ENCODE measurements at regions of chr16 and their contacts with region 1.

Region 1: DNA sequence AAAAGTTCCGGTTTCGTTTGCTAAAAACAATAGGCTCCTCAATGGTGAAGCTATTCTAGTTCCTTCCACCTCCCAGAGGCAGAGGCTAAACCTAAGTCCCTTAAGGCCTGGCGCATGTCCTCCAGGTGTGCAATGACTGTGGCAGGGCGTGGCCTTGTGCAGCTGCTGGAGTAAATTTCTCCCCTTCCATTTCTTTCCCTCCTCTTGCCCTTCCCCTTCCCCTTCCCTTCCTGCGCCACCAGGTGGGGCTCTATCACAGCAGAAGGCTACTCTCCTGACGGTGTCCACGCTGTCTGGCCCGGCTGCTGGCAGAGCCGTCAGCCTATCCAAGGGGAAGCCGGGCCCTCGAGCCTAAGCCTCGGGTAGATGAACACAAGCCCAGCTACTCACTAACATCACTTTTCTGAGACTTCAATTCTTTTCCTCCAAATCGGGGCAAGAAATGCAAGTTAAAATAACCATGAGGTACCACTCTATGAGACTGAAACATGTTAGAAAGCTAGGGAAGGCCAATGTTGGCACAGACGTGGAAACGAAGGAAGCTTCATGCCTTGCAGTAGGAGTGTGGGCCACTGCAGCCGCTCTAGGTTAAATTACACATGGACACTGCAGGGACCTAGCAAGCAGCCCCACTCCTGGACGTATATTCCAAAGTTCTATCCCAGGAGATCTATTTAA is 34.4 kb downstream of the C16orf78 start:
- DNase-seq: peak; percentile 79

Region 2: DNA sequence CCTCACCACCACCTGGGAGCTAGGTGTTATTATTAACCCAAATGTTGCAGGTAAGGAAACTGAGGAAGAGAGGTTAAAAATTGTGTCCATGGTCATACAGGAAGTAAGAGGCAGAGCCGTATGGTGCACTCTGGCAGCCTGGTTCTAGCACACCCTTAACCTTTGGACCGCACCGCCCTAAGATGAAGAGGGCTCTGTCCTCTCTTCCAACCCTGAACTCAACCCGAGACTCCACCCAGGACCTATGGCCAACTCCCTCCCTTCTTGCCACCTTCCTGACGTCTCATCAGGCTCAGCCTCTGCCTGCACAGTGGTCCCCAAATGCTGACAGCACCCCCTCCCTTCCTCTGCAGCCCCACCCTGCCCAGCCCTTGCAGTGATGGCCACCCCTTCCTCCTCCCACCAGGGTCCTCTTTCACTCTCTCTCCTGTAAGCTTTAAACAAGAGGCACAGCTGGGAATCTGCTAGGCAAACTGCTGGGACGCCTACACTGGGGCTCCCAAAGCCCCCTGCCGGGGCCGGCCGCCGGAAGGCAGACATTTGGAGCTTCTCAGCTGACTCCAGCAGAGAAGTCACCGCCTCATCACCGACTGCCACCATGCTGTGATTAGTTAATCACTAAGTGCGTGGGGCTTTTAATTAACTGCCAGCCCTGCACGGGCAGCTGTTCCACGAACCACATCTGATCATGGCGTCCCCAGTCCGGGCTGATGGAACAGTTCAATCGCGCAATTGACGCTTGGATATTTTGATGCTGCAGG is 51.1 kb before region 1 on chr16:
- in situ Hi-C with region 1: no loop called
- DNase-seq: no peak

Region 3: DNA sequence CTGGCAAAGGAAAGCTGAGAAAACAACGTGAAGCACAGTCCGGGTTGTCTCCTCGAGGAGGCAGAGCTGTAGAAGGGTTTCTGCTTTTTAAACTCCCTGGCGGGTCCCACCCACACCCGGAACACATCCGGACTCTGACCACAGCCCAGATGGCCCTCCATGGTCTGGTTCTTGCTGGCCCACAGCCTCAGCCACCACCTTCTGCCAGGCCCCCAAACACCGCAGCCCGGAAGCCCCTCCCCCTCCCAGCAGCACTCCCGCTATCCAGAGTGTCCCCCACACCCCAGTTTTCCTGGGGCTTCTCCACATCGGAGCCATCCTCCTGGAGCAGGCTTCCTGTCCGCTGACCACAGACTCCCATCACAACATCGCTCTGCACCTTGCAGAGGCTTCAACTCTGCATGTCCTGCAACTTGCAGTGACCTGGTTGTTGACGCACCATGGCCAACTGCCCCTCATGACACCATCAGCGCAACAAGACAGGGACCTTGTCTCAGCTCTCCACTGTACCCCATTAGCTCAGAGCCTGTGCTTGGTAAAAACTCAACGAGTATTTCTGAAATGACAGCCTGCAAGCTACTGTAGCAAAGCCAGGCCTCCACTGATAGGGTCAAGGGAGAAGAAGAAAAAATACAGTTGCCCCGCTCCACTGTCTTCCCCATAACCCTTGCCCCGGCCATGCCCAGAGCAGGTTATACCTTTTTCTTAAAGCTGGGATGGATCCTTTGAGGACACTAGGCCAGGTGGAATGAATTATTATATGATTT is 95.4 kb after region 1 on chr16:
- in situ Hi-C with region 1: no loop called
- DNase-seq: peak; percentile 86

Region 4: DNA sequence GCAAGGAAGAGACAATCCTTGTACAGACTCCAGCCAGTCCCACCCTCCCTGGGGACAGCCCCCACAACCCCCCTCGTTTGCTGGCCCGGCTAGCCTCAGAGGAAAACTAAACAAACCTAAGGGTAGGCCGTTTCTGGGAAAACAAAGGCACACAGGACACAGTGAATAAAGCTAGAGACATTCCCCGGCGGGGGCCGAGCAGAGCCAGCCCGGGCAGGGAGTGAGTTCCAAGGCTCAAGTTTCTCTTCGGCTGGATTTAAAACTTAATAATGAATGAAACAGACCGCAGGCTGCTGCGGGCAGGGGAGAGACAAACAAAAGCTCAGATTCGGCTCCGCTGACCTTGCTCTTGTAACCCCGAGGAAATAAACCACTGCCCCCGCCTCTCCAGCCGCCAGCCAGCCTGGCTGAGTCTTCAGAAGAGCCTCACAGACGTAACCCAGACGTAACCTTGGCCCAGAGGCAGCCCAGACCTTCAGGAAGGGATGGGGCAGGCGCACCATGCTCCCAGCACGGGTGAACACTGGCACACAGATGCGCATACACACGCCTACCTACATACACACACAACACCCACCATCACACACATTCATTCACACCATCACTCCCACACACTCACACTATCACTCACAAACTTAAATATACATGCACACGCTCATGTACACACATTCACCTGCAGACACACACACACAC is 231.9 kb after region 1 on chr16:
- in situ Hi-C with region 1: no loop called
- DNase-seq: no peak

Region 5: DNA sequence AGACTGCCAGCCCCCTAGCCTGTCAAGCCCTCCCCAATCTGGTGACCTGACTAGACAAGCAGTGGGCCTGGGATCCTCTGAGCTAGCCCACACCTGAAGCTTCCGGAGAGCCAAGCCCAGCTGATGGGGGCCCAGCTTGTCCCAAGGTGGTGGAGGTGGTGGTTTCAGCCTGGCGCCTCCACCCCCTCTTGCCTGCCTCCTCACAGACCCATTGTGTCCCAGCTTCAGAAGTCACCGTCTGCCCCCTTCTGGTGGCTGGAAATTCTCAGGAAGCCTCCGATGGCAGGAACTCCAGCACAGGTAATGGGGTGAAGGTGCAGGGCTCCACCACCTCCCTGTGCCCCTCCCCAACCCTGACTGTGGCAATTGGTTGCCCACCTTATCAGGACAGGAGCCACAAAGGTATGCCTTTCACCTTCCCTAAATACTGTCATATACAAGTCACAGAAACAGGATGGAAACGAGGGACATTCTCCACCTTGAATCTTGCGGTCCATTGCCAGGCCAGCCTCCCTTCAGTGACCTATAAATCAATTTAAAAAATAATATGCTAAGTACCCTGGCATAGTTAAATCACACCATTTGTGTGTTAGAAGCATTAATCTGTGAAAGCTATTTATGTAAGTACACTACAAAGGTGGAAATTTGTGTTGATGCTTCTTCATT is 513.9 kb after region 1 on chr16:
- in situ Hi-C with region 1: loop called (anchors 25 kb)
- DNase-seq: peak; percentile 57